CD4-positive, alpha-beta memory T cell (primary cell): ENCODE measurements at regions of chr12 and their contacts with region 1.

Region 1: DNA sequence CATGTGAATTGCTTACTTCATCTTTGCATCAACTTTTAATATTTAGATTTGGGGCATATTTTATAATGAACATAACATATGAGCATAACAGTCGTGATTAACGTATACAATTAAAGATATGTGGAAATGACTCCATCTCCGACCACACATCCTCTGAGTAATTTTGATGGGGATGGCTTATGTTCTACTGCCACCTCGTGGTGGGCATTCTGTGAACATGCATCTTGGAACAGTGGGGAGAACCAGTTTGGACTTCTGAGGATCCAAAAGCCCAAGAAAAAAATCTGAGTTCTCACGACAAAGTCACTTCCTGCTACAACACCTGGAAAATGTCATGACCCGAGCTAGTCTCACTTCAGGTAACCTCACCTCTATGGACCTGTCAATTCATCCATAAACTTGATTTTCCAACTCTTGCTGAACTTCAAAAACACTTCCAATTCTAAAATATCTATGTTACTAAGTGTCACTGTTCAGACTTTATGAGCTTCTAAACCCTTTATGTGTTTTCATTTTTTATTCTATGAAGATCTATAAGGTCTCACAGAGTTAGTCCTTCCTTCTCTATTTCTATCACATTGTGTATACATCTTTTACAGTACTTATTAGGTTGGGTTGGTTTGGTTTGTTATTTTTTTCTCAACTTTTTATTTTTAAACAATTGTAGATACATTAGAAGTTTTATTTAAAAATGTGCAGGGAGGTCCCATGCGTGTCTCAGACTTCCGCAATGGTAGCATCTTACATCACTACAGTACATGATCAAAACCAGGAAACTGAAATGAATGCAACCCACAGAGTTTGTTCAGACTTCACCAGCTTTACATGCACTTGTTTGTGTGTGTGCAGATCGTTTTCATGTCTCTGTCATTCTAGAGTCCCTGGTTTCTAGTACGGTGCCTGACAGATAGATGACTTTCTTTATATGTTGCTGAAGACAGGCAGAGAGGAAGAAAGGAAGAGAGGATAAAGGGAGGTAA is 38.2 kb upstream of the STAB2 start:
- DNase-seq: peak; percentile 47 to 62 (median 55)
- H3K4me3 ChIP-seq: no peak overlapping the region
- H3K4me3 Mint-ChIP-seq: no peak overlapping the region
- H3K27ac ChIP-seq: no peak overlapping the region
- H3K27ac Mint-ChIP-seq: peak overlapping the region in 1 of 7 donors; percentile 68
- H3K4me1 ChIP-seq: no peaks in the 10 kb centered on the region
- H3K4me1 Mint-ChIP-seq: peaks cover 0 to 5% (median 0%) of the 10 kb centered on the region in 4 donors
- H3K27me3 ChIP-seq: peaks cover 4% of the 10 kb centered on the region
- H3K27me3 Mint-ChIP-seq: peaks cover 4% of the 10 kb centered on the region in 2 donors

Region 2: GRCh38 chr12:102883204-102883799 is 665.6 kb before region 1 on chr12:
- CTCF ChIA-PET with region 1: interaction called, 56 read pairs
- POLR2A ChIA-PET with region 1: no interaction called
- intact Hi-C with region 1: no loop called
- DNase-seq: peak in 3 of 5 donors; percentile 4 to 17 (median 17)
- H3K4me3 ChIP-seq: no peak overlapping the region
- H3K4me3 Mint-ChIP-seq: no peak overlapping the region
- H3K27ac ChIP-seq: no peak overlapping the region
- H3K27ac Mint-ChIP-seq: no peak overlapping the region
- H3K4me1 ChIP-seq: no peaks in the 10 kb centered on the region
- H3K4me1 Mint-ChIP-seq: peaks cover 0 to 5% (median 4%) of the 10 kb centered on the region in 4 donors
- H3K27me3 ChIP-seq: no peaks in the 10 kb centered on the region
- H3K27me3 Mint-ChIP-seq: peaks cover 2 to 3% of the 10 kb centered on the region in 2 donors

Region 3: DNA sequence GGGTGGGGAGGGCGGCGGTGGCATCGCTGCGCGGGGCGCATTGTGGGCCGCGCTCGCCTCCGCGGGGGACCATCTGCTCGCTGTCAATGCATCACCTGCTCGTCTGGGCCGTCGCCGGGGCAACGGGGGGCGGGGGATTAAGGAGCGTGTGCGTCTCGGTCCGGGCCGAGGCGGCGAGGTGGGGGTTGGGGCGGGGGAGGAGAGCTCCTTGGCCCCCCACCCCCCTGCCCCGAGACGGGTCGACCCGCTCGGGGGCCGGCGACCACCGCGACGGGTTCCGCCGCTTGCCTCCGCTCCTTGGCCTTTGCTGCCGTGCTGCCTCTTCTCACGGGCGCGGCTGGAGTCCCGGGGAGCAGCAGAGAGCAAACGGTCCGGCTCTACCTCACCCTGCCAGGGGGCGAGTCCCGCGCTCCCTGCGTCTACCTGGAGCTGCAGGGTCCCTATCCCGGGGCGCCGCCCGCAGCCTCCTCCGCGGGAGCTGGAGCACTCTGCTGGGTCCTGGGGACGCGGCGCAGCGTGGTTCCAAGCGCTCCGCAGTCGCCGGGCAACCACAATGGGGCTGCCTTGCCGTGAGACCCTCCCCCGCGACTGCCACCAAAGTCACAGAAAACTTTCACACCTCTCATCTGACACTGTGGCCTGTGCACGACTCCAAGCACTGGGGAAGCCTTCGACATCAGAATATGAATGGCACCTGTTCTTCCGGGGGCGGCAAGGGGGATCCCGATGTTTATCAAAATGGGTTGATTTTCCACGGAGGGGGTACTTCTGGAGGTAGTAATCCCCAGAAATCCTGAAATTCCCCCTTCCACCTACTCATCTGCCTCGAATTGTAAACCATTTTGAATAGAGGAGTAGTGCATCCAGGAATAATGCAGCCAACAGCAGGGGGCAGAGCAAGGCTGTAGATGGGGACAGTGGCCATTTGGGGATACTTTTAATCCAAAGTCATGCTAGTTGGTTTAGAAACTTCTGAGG is 53.1 kb before region 1 on chr12 and contains the start of gene C12orf42:
- CTCF ChIA-PET with region 1: interaction called, 10 read pairs
- POLR2A ChIA-PET with region 1: no interaction called
- intact Hi-C with region 1: loop called (anchors 2 kb)
- DNase-seq: peak; percentile 44 to 59 (median 53)
- H3K4me3 ChIP-seq: peak within 1 kb of the TSS; percentile 31 to 51
- H3K4me3 Mint-ChIP-seq: peak within 1 kb of the TSS; percentile 77 to 93 (median 82)
- H3K27ac ChIP-seq: peak within 1 kb of the TSS; percentile 31
- H3K27ac Mint-ChIP-seq: peak within 1 kb of the TSS; percentile 22 to 86 (median 71)
- H3K4me1 ChIP-seq: peaks cover 9% of the 10 kb centered on the region
- H3K4me1 Mint-ChIP-seq: peaks cover 12 to 16% (median 15%) of the 10 kb centered on the region in 4 donors
- H3K27me3 ChIP-seq: peaks cover 4% of the 10 kb centered on the region
- H3K27me3 Mint-ChIP-seq: peaks cover 10 to 12% of the 10 kb centered on the region in 2 donors
- total RNA-seq, gene C12orf42: 8.4 to 12.8 TPM

Region 4: GRCh38 chr12:103530307-103531066 is 18.4 kb before region 1 on chr12:
- CTCF ChIA-PET with region 1: interaction called, 13 read pairs
- POLR2A ChIA-PET with region 1: no interaction called
- intact Hi-C with region 1: no loop called
- DNase-seq: no peak
- H3K4me3 ChIP-seq: no peak overlapping the region
- H3K4me3 Mint-ChIP-seq: peak overlapping the region in 1 of 8 donors; percentile 7
- H3K27ac ChIP-seq: no peak overlapping the region
- H3K27ac Mint-ChIP-seq: no peak overlapping the region
- H3K4me1 ChIP-seq: no peaks in the 10 kb centered on the region
- H3K4me1 Mint-ChIP-seq: peaks cover 0 to 1% (median 0%) of the 10 kb centered on the region in 4 donors
- H3K27me3 ChIP-seq: no peaks in the 10 kb centered on the region
- H3K27me3 Mint-ChIP-seq: peaks cover 3 to 6% of the 10 kb centered on the region in 2 donors

Region 5: DNA sequence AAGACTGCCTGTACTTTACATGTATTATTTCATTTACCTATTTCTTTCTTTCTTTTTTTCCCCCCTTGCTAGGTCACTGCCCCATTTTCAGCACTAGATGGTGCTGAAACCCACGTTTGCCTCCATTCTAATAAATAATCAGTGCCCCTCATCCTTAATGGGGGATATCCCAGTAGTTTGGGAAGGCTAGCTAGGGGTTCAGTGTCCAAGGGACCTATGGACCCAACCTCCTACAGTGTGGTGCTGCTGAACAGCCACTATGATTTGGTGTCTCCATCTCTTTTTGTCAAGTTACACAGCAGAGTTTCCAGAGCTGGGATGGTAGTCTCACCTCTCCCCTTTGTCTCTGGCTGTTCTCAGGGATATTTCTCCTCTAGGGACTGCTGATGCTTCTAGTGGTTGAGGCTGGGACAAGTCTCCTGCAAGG is 508.9 kb after region 1 on chr12:
- CTCF ChIA-PET with region 1: no interaction called
- POLR2A ChIA-PET with region 1: no interaction called
- intact Hi-C with region 1: no loop called
- DNase-seq: peak in 4 of 5 donors; percentile 7 to 28 (median 22)
- H3K4me3 ChIP-seq: no peak overlapping the region
- H3K4me3 Mint-ChIP-seq: no peak overlapping the region
- H3K27ac ChIP-seq: no peak overlapping the region
- H3K27ac Mint-ChIP-seq: peak overlapping the region in 1 of 7 donors; percentile 27
- H3K4me1 ChIP-seq: no peaks in the 10 kb centered on the region
- H3K4me1 Mint-ChIP-seq: no peaks in the 10 kb centered on the region
- H3K27me3 ChIP-seq: peaks cover 9% of the 10 kb centered on the region
- H3K27me3 Mint-ChIP-seq: peaks cover 9 to 23% of the 10 kb centered on the region in 2 donors